Activated CD4-positive, alpha-beta memory T cell treated with anti-CD3 and anti-CD28 coated beads for 36 hours (primary cell): ENCODE measurements at regions of chr17 and their contacts with region 1.

Region 1: DNA sequence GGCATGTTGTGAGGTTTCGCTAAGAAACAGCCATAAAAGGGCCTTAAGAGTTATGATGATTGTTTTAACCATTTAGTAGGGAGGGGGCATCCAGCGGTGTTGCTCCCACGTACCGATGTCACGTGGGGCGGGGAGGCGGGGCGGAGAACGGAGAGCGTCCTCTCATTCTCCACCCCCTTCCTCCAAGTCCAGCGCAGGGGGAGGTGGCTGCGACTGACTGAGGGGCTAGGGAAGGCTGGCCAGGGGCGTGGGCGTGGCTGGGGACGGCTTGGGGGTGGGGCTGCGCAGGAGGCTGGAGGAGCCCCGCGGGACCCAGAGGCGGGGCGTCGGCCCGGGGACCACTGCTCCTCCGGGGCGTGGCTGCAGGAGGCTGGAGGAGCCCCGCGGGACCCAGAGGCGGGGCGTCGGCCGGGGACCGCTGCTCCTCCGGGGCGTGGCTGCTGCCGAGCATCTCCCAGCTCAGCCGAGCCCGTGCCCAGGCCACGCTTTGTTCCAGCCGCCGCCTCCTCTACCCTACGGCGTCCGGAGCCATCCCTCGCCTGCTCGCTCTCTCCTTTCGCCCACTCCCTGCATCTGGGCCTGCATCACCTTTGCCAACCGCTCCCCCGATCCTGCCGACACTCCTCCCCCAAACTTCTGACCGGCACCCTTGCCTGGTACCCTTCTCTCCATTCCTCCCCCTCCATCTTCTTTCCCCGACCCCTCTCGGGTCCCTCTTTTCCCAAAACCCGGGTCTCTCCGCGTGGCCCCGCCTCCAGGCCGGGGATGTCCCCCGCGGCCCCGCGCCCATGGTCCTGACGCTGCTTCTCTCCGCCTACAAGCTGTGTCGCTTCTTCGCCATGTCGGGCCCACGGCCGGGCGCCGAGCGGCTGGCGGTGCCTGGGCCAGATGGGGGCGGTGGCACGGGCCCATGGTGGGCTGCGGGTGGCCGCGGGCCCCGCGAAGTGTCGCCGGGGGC is at the start of gene SARM1:
- DNase-seq: peak; percentile 93
- H3K4me3 Mint-ChIP-seq: peak within 1 kb of the TSS; percentile 86
- H3K27ac Mint-ChIP-seq: peak within 1 kb of the TSS; percentile 79
- H3K4me1 Mint-ChIP-seq: peaks cover 16% of the 10 kb centered on the region
- H3K27me3 Mint-ChIP-seq: no peaks in the 10 kb centered on the region
- total RNA-seq, gene SARM1: 16.5 to 18.3 TPM

Region 2: DNA sequence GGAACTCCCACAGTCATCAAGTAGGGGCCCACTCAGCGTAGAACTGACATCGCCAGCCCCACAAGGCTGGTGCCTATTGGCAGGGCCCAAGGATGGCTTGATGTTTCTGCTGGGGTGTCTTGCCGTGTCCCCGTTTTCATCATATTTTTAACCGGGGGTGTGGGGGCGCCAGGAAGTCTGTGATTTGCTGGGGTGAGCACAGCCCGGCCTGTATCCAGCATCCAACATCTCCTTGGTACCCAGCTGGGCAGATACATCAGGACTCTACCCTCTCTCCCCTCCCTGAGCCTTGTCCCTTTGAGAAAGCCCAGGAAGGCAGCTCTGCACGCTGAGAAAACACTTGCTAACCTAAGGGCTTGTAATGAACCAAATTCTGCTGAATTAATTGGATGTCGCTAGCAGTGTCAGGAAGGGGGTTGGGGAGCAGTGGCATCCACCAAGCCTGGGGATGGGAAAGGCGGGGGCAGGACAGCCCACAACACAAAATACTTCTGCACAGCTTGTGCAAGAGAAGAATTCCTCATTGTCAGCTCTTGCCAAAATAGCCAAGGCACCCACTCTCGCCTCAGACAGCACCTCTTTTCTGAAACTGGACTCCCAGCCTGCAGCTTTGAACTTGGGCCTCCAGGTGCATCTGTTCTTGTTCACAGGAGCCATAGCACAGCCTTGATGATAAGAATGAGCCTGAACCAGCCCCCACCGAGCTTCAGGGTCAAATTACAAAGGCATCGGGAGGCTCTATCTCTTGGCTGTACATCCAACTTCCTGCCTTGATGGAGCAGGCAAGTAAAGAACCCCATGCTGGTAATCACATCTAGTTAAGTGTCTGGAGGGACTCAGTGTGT is 414.7 kb before region 1 on chr17:
- CTCF ChIA-PET with region 1: no interaction called
- POLR2A ChIA-PET with region 1: no interaction called
- intact Hi-C with region 1: no loop called
- DNase-seq: no peak
- H3K4me3 Mint-ChIP-seq: no peak overlapping the region
- H3K27ac Mint-ChIP-seq: no peak overlapping the region
- H3K4me1 Mint-ChIP-seq: no peaks in the 10 kb centered on the region
- H3K27me3 Mint-ChIP-seq: peaks cover 5% of the 10 kb centered on the region

Region 3: DNA sequence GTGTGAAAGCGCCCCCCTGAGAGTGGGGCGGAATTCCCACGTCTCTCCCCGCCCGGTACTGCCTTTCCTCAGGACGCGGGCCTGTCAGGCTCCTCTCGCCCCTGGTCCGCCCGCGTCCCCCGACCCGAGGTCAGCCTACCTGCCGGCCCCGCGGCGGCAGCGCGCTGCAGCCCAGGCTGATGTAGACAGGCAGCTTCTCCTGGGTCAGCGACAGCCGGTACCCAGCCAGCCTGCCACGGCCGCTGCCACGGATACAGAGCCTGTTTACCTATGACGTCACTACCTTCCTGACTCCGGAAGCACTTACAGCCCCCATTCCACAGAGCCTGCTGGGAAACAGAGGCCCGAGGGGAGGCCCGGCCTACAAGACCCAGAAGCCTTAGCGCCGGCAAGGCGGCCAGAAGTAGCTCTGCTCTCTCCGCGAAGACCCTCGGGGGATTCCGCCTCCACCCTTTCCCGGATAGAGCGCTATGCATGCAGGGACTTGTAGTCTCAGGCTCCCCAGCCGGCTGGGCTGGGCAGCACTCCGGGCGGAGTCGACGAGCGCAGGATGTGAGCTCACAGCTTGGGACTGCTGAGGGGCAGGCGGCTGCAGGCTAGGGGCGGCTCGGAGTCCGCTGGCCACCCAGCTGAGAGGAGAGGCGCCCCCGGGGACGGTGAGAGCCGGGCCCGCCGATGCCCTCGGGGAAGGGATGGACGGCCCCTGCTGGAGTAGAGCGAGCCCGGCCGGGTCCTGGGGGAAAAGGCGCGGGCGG is 36.1 kb before region 1 on chr17 and contains the starts of genes IFT20 and TNFAIP1:
- CTCF ChIA-PET with region 1: no interaction called
- POLR2A ChIA-PET with region 1: interaction called, 8 read pairs
- intact Hi-C with region 1: loop called (anchors 1 kb)
- DNase-seq: peak; percentile 99
- H3K4me3 Mint-ChIP-seq: peak within 1 kb of the TSS; percentile 94
- H3K27ac Mint-ChIP-seq: peak within 1 kb of the TSS; percentile 87
- H3K4me1 Mint-ChIP-seq: peaks cover 36% of the 10 kb centered on the region
- H3K27me3 Mint-ChIP-seq: no peaks in the 10 kb centered on the region
- total RNA-seq, gene IFT20: 20.3 to 20.6 TPM
- total RNA-seq, gene TNFAIP1: 24.4 to 27.3 TPM

Region 4: GRCh38 chr17:28384281-28385036 is 12.9 kb after region 1 on chr17:
- CTCF ChIA-PET with region 1: no interaction called
- POLR2A ChIA-PET with region 1: interaction called, 15 read pairs
- intact Hi-C with region 1: no loop called
- DNase-seq: peak; percentile 84
- H3K4me3 Mint-ChIP-seq: peak overlapping the region; percentile 88
- H3K27ac Mint-ChIP-seq: peak overlapping the region; percentile 59
- H3K4me1 Mint-ChIP-seq: peaks cover 25% of the 10 kb centered on the region
- H3K27me3 Mint-ChIP-seq: no peaks in the 10 kb centered on the region

Region 5: DNA sequence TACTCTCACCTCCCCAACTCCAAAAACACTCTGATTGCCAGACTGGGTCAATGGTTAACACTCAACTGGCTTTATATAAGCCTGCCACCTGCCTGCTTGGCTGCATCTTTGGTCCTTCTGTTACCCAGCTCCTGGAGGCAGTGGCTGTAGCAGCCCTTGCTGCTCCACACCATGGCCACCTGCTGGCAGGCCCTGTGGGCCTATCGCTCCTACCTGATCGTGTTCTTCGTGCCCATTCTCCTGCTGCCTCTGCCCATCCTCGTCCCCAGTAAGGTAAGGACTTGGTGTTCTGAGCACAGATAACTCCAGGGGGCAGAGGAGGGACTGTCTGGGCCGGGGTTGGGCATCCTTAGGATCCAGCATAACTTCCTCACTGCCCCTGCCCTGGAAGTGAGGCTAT is 102.0 kb after region 1 on chr17 and contains the start of gene SLC13A2:
- CTCF ChIA-PET with region 1: no interaction called
- POLR2A ChIA-PET with region 1: no interaction called
- intact Hi-C with region 1: no loop called
- DNase-seq: peak; percentile 7
- H3K4me3 Mint-ChIP-seq: no peak within 1 kb of the TSS
- H3K27ac Mint-ChIP-seq: no peak within 1 kb of the TSS
- H3K4me1 Mint-ChIP-seq: peaks cover 17% of the 10 kb centered on the region
- H3K27me3 Mint-ChIP-seq: no peaks in the 10 kb centered on the region
- total RNA-seq, gene SLC13A2: not detected